ENCODE measurements at regions of chr11 and their contacts with region 1.

Region 1: GRCh38 chr11:33936725-33937604 is 45.1 kb upstream of the LMO2 start:
- DNase-seq: peak; percentile 99
- H3K4me3 ChIP-seq: no peak overlapping the region
- H3K27ac ChIP-seq: peak overlapping the region; percentile 97
- H3K4me1 ChIP-seq: peaks cover 63% of the 10 kb centered on the region
- H3K27me3 ChIP-seq: no peaks in the 10 kb centered on the region
- CTCF ChIP-seq: no peak
- POLR2A ChIP-seq: peak; percentile 59

Region 2: GRCh38 chr11:33736148-33736809 is 200.7 kb before region 1 on chr11 and contains the start of gene CD59:
- CTCF ChIA-PET with region 1: no interaction called
- POLR2A ChIA-PET with region 1: no interaction called
- dilution Hi-C with region 1: no loop called
- intact Hi-C with region 1: no loop called
- DNase-seq: peak; percentile 96
- H3K4me3 ChIP-seq: peak within 1 kb of the TSS; percentile 74 to 98 (median 95)
- H3K27ac ChIP-seq: peak within 1 kb of the TSS; percentile 93
- H3K4me1 ChIP-seq: peaks cover 43% of the 10 kb centered on the region
- H3K27me3 ChIP-seq: no peaks in the 10 kb centered on the region
- CTCF ChIP-seq: no peak
- POLR2A ChIP-seq: peak; percentile 93
- total RNA-seq, gene CD59: 1,084 and 1,141 TPM in 2 replicates

Region 3: DNA sequence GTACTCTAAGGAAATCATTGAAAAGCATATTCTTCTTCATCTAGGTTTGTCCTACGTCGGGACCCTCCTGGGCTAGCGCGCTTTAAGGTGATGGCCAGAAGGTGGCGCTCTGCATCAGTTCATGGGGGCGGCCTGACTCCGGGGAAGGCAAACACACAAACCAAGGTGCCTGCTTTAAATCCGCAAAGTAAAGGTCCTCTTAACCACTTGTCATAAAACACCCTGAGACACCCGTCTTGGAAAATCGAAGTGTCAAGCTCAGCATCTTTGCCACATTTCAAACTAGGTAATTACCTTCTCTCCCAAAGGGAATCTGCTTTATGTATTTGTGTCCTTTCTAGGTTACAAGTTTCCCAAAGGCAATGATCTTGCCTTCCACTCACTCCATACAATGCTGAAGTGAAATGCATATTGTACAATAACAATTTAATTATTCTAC is 79.0 kb before region 1 on chr11:
- CTCF ChIA-PET with region 1: interaction called, 8 read pairs
- POLR2A ChIA-PET with region 1: no interaction called
- dilution Hi-C with region 1: no loop called
- intact Hi-C with region 1: loop called (anchors 1 kb)
- DNase-seq: peak; percentile 85
- H3K4me3 ChIP-seq: no peak overlapping the region
- H3K27ac ChIP-seq: no peak overlapping the region
- H3K4me1 ChIP-seq: no peaks in the 10 kb centered on the region
- H3K27me3 ChIP-seq: no peaks in the 10 kb centered on the region
- CTCF ChIP-seq: peak; percentile 89 to 92
- POLR2A ChIP-seq: no peak

Region 4: DNA sequence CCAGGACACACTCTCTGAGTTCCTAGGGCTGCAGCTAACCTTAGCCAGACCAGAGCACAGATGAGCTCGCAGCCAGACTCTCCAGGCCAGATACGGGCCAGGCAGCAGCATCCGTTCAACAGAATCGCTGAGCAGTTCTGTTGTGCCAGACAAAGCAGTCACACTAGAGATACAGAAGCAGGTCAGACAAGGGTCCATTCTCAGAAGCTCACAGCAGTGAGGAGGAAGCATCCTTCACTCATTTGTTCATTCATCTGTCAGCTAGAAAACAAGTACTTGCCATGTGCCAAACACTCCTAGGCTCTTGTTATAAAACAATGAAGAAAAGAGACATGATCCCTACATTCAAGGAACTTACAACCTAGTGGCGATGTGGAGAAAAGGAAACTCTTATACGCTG is 47.7 kb before region 1 on chr11:
- CTCF ChIA-PET with region 1: no interaction called
- POLR2A ChIA-PET with region 1: no interaction called
- dilution Hi-C with region 1: no loop called
- intact Hi-C with region 1: no loop called
- DNase-seq: no peak
- H3K4me3 ChIP-seq: no peak overlapping the region
- H3K27ac ChIP-seq: no peak overlapping the region
- H3K4me1 ChIP-seq: peaks cover 3% of the 10 kb centered on the region
- H3K27me3 ChIP-seq: peaks cover 5 to 17% of the 10 kb centered on the region in 2 experiments
- CTCF ChIP-seq: no peak
- POLR2A ChIP-seq: no peak

Region 5: GRCh38 chr11:33899383-33900037 is 37.5 kb before region 1 on chr11:
- CTCF ChIA-PET with region 1: interaction called, 3 read pairs
- POLR2A ChIA-PET with region 1: interaction called, 3 read pairs
- dilution Hi-C with region 1: no loop called
- intact Hi-C with region 1: loop called (anchors 1 kb)
- DNase-seq: peak; percentile 98
- H3K4me3 ChIP-seq: no peak overlapping the region
- H3K27ac ChIP-seq: peak overlapping the region; percentile 19
- H3K4me1 ChIP-seq: peaks cover 18% of the 10 kb centered on the region
- H3K27me3 ChIP-seq: peaks cover 2 to 3% of the 10 kb centered on the region in 2 experiments
- CTCF ChIP-seq: no peak
- POLR2A ChIP-seq: no peak

Region 6: GRCh38 chr11:33952805-33953204 is 15.8 kb after region 1 on chr11:
- CTCF ChIA-PET with region 1: interaction called, 3 read pairs
- POLR2A ChIA-PET with region 1: no interaction called
- dilution Hi-C with region 1: no loop called
- intact Hi-C with region 1: loop called (anchors 1 kb)
- DNase-seq: no peak
- H3K4me3 ChIP-seq: no peak overlapping the region
- H3K27ac ChIP-seq: no peak overlapping the region
- H3K4me1 ChIP-seq: peaks cover 25% of the 10 kb centered on the region
- H3K27me3 ChIP-seq: no peaks in the 10 kb centered on the region
- CTCF ChIP-seq: no peak
- POLR2A ChIP-seq: no peak

Region 7: GRCh38 chr11:33977676-33978075 is 40.7 kb after region 1 on chr11:
- CTCF ChIA-PET with region 1: no interaction called
- POLR2A ChIA-PET with region 1: no interaction called
- dilution Hi-C with region 1: no loop called
- intact Hi-C with region 1: no loop called
- DNase-seq: no peak
- H3K4me3 ChIP-seq: no peak overlapping the region
- H3K27ac ChIP-seq: no peak overlapping the region
- H3K4me1 ChIP-seq: no peaks in the 10 kb centered on the region
- H3K27me3 ChIP-seq: peaks cover 0 to 7% of the 10 kb centered on the region in 2 experiments
- CTCF ChIP-seq: no peak
- POLR2A ChIP-seq: no peak

Measured in endothelial cell of umbilical vein (primary cell).